ENCODE measurements at regions of chr3 and their contacts with region 1.

Region 1: DNA sequence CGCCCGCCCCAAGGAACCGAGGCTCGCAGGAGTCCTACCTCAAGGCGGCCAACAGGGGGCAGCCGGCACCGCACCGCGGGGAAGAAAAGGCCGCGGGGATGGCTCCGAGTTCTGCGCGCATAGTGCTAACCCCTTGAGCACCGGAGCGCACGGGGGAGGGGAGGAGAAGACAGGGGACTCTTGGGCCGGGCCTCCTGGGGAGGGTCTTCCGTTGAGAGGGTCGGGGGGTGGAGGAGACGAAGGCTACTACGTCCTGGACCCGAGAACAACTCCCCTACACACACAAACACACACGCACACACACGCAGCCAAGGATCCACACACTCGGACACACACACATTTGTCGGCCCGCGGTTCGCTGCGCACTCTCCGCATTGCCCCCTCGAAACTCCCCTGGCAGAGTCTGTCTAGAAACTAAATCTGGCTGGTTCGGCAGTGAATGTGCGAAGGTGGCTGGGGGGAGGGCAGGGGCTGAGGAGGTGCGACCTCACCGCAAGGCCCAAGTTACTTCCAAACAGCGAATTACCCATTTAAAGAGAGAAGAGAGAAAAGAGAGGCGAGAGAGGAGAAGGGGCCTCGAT is 1.8 kb downstream of the WNT5A start:
- DNase-seq: peak; percentile 85
- H3K4me3 ChIP-seq: peak overlapping the region; percentile 79 to 81
- H3K27ac ChIP-seq: peak overlapping the region; percentile 62 to 81
- H3K4me1 ChIP-seq: peaks cover 28% of the 10 kb centered on the region
- H3K27me3 ChIP-seq: no peaks in the 10 kb centered on the region
- CTCF ChIP-seq: peak in 2 of 3 experiments; percentile 51 to 89
- POLR2A ChIP-seq: no peak

Region 2: GRCh38 chr3:55434789-55435188 is 50.5 kb before region 1 on chr3:
- intact Hi-C with region 1: no loop called
- DNase-seq: no peak
- H3K4me3 ChIP-seq: no peak overlapping the region
- H3K27ac ChIP-seq: no peak overlapping the region
- H3K4me1 ChIP-seq: no peaks in the 10 kb centered on the region
- H3K27me3 ChIP-seq: no peaks in the 10 kb centered on the region
- CTCF ChIP-seq: peak in 1 of 3 experiments; percentile 21
- POLR2A ChIP-seq: no peak

Region 3: DNA sequence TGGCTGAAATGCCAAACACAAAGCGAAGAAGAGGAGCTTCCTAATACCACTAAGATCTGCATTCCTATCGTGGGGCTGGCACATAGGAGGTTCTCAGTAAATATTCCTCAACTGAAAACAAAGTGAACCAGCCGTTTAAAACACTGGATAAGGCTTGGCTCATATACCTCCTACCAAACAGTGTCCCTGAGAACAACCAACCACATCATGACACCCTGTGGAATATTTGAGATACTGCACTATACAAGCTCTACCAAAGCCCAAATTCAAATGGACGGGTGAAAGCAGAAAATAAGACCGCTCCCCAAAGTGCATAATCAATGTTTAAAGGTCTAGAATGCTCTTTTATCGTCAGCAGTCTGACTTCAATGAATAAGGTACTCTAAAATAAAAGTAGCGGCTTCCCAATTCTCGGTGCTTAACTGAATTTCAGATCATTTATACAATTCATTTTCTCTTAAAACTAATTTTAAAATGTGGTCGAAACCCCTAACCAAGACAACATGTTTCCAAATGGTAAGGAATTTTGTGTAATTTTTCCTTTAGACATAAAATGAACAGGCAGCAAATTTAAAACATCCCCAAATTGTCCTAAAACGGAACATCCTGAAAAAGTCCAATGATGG is 557.1 kb after region 1 on chr3:
- intact Hi-C with region 1: loop called (anchors 10 kb)
- DNase-seq: no peak
- H3K4me3 ChIP-seq: no peak overlapping the region
- H3K27ac ChIP-seq: no peak overlapping the region
- H3K4me1 ChIP-seq: no peaks in the 10 kb centered on the region
- H3K27me3 ChIP-seq: no peaks in the 10 kb centered on the region
- CTCF ChIP-seq: peak; percentile 62 to 67 (median 66)
- POLR2A ChIP-seq: no peak

Measured in testis (tissue), 5 donors.